HCT116 (cell line): ENCODE measurements at regions of chr19 and their contacts with region 1.

Region 1: DNA sequence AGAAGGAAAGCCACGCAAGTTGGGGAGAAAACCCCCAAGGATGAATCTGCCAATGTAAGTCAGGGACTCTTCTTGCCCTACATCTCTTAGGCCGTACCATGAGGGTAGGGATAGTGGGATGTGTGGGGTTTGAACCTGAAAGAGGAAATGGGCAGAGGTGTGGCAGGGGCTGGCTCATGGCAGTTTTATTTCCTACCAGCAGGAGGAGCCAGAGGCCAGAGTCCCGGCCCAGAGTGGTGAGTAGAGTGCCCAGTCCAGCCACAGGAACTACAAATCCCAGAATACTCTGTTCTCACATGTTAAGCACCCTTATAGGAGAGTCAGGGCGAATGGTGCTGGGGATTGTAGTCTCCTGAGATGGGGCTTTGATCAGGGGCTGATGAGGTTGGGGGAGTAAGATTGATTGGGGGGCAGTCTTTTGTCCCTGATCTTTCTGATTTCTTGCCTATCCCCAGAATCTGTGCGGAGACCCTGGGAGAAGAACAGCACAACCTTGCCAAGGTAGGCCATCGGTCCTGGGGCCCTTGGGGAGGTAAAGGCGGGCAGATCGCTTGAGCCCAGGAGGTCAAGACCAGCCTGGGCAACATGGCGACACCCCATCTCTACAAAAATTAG is 16.5 kb downstream of the VASP start:
- DNase-seq: peak; percentile 76
- ATAC-seq: peak; percentile 85
- H3K4me3 ChIP-seq: no peak overlapping the region
- H3K27ac ChIP-seq: peak overlapping the region; percentile 33
- H3K4me1 ChIP-seq: peaks cover 20 to 64% of the 10 kb centered on the region in 2 experiments; a peak in 3 of 4 replicates
- H3K27me3 ChIP-seq: no peaks in the 10 kb centered on the region
- CTCF ChIP-seq: peak; percentile 85 to 93 (median 90)
- POLR2A ChIP-seq: no peak
- RAD21 ChIP-seq: peak; percentile 95

Region 2: DNA sequence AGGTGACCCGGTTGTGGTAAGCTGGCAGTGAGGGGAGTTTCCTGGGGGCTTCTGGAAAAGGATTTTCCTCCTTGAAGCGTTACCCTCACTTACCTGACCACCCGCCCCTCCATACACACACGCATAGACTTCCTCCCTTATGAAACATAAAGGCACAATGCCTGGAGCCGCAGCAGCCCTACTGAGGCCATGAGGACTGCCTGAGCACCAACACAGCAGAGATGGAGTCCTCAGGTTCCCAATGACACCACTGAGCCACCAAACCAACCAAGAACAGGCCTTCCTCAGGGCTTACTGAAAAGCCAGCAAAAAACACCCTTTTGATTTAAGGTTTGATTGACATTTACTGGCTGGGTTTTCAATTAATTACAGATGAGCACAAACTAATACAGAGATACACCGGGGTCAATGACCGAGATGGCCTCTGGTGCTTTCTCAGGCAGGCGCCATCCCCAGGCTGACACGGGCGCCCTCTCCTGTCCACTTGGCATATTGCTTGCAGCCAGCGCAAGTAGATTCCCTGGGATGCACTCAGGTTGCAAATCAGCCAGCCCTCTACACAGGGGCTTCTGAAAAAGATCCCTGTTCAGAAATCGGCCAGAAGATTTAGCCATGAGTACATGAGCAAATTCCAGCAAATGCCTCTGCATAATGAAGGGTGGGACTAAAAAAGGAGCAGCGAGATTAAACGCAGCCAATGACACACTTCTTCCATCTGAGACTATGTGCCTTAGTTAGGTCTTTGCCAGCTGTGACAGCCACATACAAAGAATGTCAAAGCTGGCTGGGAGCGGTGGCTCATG is 46.1 kb after region 1 on chr19:
- CTCF ChIA-PET with region 1: no interaction called
- POLR2A ChIA-PET with region 1: no interaction called
- RAD21 ChIA-PET with region 1: no interaction called
- intact Hi-C with region 1: loop called (anchors 1 kb)
- DNase-seq: peak; percentile 24
- ATAC-seq: peak; percentile 84
- H3K4me3 ChIP-seq: no peak overlapping the region
- H3K27ac ChIP-seq: peak overlapping the region; percentile 25; the same call in 1 of the 2 replicates
- H3K4me1 ChIP-seq: peaks cover 14 to 28% of the 10 kb centered on the region in 2 experiments
- H3K27me3 ChIP-seq: no peaks in the 10 kb centered on the region
- CTCF ChIP-seq: peak; percentile 70 to 96 (median 93); a peak in 5 of 6 replicates
- POLR2A ChIP-seq: no peak
- RAD21 ChIP-seq: peak; percentile 76

Region 3: GRCh38 chr19:45670670-45671453 is 147.1 kb after region 1 on chr19:
- CTCF ChIA-PET with region 1: no interaction called
- POLR2A ChIA-PET with region 1: no interaction called
- RAD21 ChIA-PET with region 1: no interaction called
- intact Hi-C with region 1: no loop called
- DNase-seq: peak; percentile 93
- ATAC-seq: peak; percentile 81
- H3K4me3 ChIP-seq: peak overlapping the region; percentile 76 to 85
- H3K27ac ChIP-seq: peak overlapping the region; percentile 71
- H3K4me1 ChIP-seq: peaks cover 11 to 40% of the 10 kb centered on the region in 2 experiments
- H3K27me3 ChIP-seq: no peaks in the 10 kb centered on the region
- CTCF ChIP-seq: no peak
- POLR2A ChIP-seq: peak; percentile 42
- RAD21 ChIP-seq: no peak